ENCODE measurements at regions of chr16 and their contacts with region 1.

Region 1: GRCh38 chr16:28823872-28824716 is 1.3 kb downstream of the ATXN2L start:
- DNase-seq: peak; percentile 98 to 99 (median 98)
- ATAC-seq: peak; percentile 92 to 97 (median 96)
- H3K4me3 ChIP-seq: peak overlapping the region; percentile 72 to 100 (median 99)
- H3K27ac ChIP-seq: peak overlapping the region; percentile 90 to 100 (median 99)
- H3K4me1 ChIP-seq: peaks cover 0 to 33% (median 21%) of the 10 kb centered on the region in 12 donors
- H3K27me3 ChIP-seq: no peaks in the 10 kb centered on the region
- CTCF ChIP-seq: peak in 11 of 12 donors; percentile 6 to 51 (median 31)
- POLR2A ChIP-seq: peak in 1 of 2 donors; percentile 53

Region 2: GRCh38 chr16:28524681-28525171 is 299.4 kb before region 1 on chr16:
- intact Hi-C with region 1: no loop called
- DNase-seq: no peak
- ATAC-seq: no peak
- H3K4me3 ChIP-seq: no peak overlapping the region
- H3K27ac ChIP-seq: no peak overlapping the region
- H3K4me1 ChIP-seq: peaks cover 0 to 13% (median 0%) of the 10 kb centered on the region in 12 donors
- H3K27me3 ChIP-seq: no peaks in the 10 kb centered on the region
- CTCF ChIP-seq: no peak
- POLR2A ChIP-seq: no peak

Region 3: GRCh38 chr16:28597692-28598261 is 226.3 kb before region 1 on chr16:
- intact Hi-C with region 1: no loop called
- DNase-seq: no peak
- ATAC-seq: no peak
- H3K4me3 ChIP-seq: no peak overlapping the region
- H3K27ac ChIP-seq: no peak overlapping the region
- H3K4me1 ChIP-seq: peaks cover 0 to 19% (median 4%) of the 10 kb centered on the region in 12 donors
- H3K27me3 ChIP-seq: peaks cover 0 to 11% (median 0%) of the 10 kb centered on the region in 9 donors
- CTCF ChIP-seq: no peak
- POLR2A ChIP-seq: no peak

Region 4: GRCh38 chr16:28863929-28864793 is 40.1 kb after region 1 on chr16:
- intact Hi-C with region 1: loop called in 3 of 10 experiments (anchors 1 to 5 kb)
- DNase-seq: peak in 2 of 5 donors; percentile 35 to 39
- ATAC-seq: peak in 2 of 4 donors; percentile 13 to 27
- H3K4me3 ChIP-seq: peak overlapping the region; percentile 68 to 100 (median 92)
- H3K27ac ChIP-seq: peak overlapping the region; percentile 91 to 99 (median 98)
- H3K4me1 ChIP-seq: peaks cover 0 to 32% (median 19%) of the 10 kb centered on the region in 12 donors
- H3K27me3 ChIP-seq: no peaks in the 10 kb centered on the region
- CTCF ChIP-seq: no peak
- POLR2A ChIP-seq: no peak

Region 5: GRCh38 chr16:28879841-28880588 is 55.9 kb after region 1 on chr16:
- intact Hi-C with region 1: loop called in 1 of 10 experiments (anchors 5 kb)
- DNase-seq: peak; percentile 88 to 93 (median 89)
- ATAC-seq: peak; percentile 61 to 96 (median 94)
- H3K4me3 ChIP-seq: peak overlapping the region; percentile 29 to 92 (median 69)
- H3K27ac ChIP-seq: peak overlapping the region in 4 of 12 donors; percentile 24 to 56 (median 34)
- H3K4me1 ChIP-seq: peaks cover 4 to 16% (median 11%) of the 10 kb centered on the region in 12 donors
- H3K27me3 ChIP-seq: peaks cover 0 to 10% (median 0%) of the 10 kb centered on the region in 9 donors
- CTCF ChIP-seq: peak in 5 of 12 donors; percentile 7 to 40 (median 16)
- POLR2A ChIP-seq: peak in 1 of 2 donors; percentile 43

Region 6: DNA sequence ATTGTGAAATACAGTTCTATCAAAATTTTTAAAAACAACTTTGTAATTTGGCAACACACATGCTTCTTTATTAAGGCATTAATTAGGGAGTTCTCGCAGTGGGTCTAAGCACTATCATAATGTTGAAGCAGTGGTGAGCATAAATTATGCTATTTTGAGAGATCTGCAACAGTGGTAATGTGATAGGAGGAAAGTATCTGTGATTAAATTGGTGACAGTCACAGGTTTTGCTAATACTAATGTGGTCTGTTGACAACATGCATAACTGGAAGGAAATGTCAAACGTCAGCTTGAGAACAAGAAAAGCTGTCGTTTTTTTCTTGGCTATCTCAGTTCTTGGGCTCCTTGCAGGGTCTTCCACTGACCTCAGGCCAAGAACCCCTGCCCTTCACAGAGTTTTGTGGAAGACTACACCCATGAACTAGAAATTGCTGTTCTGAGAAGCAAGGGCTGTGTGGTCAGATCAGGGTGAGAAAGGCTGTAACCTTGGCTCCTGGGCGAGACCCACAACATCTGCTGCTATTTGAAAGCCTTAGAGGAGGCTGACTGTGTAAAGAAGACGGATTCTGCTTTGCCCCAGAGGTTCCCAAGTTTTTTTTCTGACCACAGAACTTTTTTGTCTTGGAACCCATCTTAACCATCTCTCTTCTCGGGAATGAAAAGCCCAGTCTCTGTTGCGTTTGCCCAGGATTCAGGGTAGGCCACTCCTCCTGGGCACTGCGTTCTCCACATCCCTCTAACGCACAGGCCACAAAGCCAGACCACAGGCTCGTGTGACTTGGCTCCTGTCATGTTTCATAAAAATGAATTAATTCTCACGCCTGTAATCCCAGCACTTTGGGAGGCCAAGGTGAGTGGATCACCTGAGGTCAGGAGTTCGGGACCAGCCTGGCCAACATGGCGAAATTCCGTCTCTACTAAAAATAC is 68.1 kb after region 1 on chr16:
- intact Hi-C with region 1: no loop called
- DNase-seq: no peak
- ATAC-seq: no peak
- H3K4me3 ChIP-seq: no peak overlapping the region
- H3K27ac ChIP-seq: no peak overlapping the region
- H3K4me1 ChIP-seq: no peaks in the 10 kb centered on the region
- H3K27me3 ChIP-seq: no peaks in the 10 kb centered on the region
- CTCF ChIP-seq: no peak
- POLR2A ChIP-seq: no peak

Region 7: DNA sequence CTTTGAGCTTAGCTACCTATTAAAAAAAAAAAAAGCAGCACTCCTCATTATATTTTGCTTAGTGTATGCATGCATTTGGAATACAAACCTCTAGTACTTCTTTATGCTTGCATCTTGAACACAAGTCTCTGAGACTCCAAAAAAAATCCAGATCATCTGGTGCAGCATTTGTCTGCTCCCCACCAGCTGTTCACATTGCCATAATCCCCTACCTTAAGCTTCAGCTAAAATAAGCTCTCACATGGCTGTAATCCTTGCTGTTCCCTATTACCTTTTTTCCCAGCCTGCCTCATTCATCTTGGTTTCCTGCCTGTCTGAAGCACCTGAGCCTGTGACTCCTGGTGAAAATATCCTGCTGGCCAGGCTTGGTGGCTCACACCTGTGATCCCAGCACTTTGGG is 119.2 kb after region 1 on chr16:
- intact Hi-C with region 1: loop called in 3 of 10 experiments (anchors 5 kb)
- DNase-seq: no peak
- ATAC-seq: no peak
- H3K4me3 ChIP-seq: no peak overlapping the region
- H3K27ac ChIP-seq: no peak overlapping the region
- H3K4me1 ChIP-seq: peaks cover 0 to 14% (median 6%) of the 10 kb centered on the region in 12 donors
- H3K27me3 ChIP-seq: no peaks in the 10 kb centered on the region
- CTCF ChIP-seq: no peak
- POLR2A ChIP-seq: no peak

Region 8: GRCh38 chr16:28950648-28951409 is 126.7 kb after region 1 on chr16 and contains the start of gene NFATC2IP:
- intact Hi-C with region 1: loop called in 5 of 10 experiments (anchors 1 to 5 kb)
- DNase-seq: peak; percentile 100
- ATAC-seq: peak; percentile 98 to 100 (median 99)
- H3K4me3 ChIP-seq: peak within 1 kb of the TSS; percentile 77 to 100 (median 90)
- H3K27ac ChIP-seq: peak within 1 kb of the TSS; percentile 79 to 94 (median 84)
- H3K4me1 ChIP-seq: peaks cover 0 to 24% (median 12%) of the 10 kb centered on the region in 12 donors
- H3K27me3 ChIP-seq: no peaks in the 10 kb centered on the region
- CTCF ChIP-seq: no peak
- POLR2A ChIP-seq: peak in 1 of 2 donors; percentile 41
- total RNA-seq, gene NFATC2IP: 11.1 to 25.3 (median 19.5) TPM

Region 9: DNA sequence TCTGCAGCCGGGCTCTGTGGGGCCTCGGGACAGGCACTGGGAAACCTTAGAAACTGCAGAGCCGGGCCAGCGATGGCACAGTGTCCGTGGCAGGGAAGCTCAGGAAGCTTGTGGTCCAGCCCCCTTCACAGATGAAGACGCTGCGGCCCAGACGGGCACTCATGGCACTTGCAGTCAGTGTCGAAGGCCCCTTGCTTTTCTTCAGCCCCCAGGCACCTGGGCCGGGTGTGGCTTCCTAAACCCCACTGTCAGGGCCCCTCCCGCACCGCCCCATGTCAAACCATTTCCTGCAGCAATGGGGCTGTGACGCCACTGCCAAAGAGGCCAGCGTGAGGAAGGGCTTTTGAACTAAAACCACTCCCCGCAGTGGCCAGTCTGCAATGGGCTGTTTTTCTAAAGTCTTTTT is 324.8 kb after region 1 on chr16:
- intact Hi-C with region 1: no loop called
- DNase-seq: peak; percentile 41 to 81 (median 63)
- ATAC-seq: peak in 3 of 4 donors; percentile 49 to 82 (median 49)
- H3K4me3 ChIP-seq: no peak overlapping the region
- H3K27ac ChIP-seq: peak overlapping the region in 1 of 12 donors; percentile 72
- H3K4me1 ChIP-seq: peaks cover 0 to 20% (median 0%) of the 10 kb centered on the region in 12 donors
- H3K27me3 ChIP-seq: no peaks in the 10 kb centered on the region
- CTCF ChIP-seq: no peak
- POLR2A ChIP-seq: no peak

Measured in heart left ventricle (tissue), 16 donors.